Mammary epithelial cell (primary cell): ENCODE measurements at regions of chr10 and their contacts with region 1.

Region 1: DNA sequence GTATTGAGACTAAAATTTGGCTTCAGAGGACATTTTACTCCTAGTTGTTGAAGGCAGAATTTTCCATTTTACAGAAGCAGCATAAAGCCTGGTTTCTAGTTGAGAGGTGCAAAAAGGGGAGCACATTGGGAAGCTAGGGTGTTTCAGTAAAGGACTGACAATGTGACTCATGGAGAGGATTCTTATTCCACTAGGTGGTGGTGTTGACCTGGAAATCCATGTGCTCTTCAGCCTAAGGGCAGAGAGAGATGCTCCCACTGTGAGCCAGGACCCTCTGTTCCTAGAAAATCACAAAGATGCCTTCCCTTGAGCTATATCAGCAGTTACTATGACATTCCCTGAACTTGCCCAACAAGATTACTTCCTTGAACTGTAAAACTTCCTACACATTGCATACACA is 687.8 kb downstream of the IPMK start:
- DNase-seq: peak; percentile 27
- H3K4me3 ChIP-seq: no peak overlapping the region
- H3K27ac ChIP-seq: no peak overlapping the region
- H3K4me1 ChIP-seq: no peaks in the 10 kb centered on the region
- H3K27me3 ChIP-seq: peaks cover under 1% of the 10 kb centered on the region
- CTCF ChIP-seq: peak; percentile 37 to 75

Region 2: GRCh38 chr10:57716886-57717285 is 137.0 kb after region 1 on chr10:
- CTCF ChIA-PET with region 1: no interaction called
- dilution Hi-C with region 1: no loop called
- in situ Hi-C with region 1: no loop called
- intact Hi-C with region 1: loop called (anchors 1 kb)
- DNase-seq: peak; percentile 45
- H3K4me3 ChIP-seq: no peak overlapping the region
- H3K27ac ChIP-seq: no peak overlapping the region
- H3K4me1 ChIP-seq: no peaks in the 10 kb centered on the region
- H3K27me3 ChIP-seq: no peaks in the 10 kb centered on the region
- CTCF ChIP-seq: peak; percentile 56 to 75

Region 3: GRCh38 chr10:57849691-57850357 is 269.9 kb after region 1 on chr10:
- CTCF ChIA-PET with region 1: no interaction called
- dilution Hi-C with region 1: no loop called
- in situ Hi-C with region 1: no loop called
- intact Hi-C with region 1: loop called (anchors 1 kb)
- DNase-seq: peak; percentile 13
- H3K4me3 ChIP-seq: no peak overlapping the region
- H3K27ac ChIP-seq: no peak overlapping the region
- H3K4me1 ChIP-seq: no peaks in the 10 kb centered on the region
- H3K27me3 ChIP-seq: no peaks in the 10 kb centered on the region
- CTCF ChIP-seq: peak; percentile 50 to 53

Region 4: GRCh38 chr10:58072634-58073033 is 492.7 kb after region 1 on chr10:
- CTCF ChIA-PET with region 1: no interaction called
- dilution Hi-C with region 1: no loop called
- in situ Hi-C with region 1: loop called (anchors 25 kb)
- intact Hi-C with region 1: loop called (anchors 2 kb)
- DNase-seq: no peak
- H3K4me3 ChIP-seq: no peak overlapping the region
- H3K27ac ChIP-seq: no peak overlapping the region
- H3K4me1 ChIP-seq: no peaks in the 10 kb centered on the region
- H3K27me3 ChIP-seq: no peaks in the 10 kb centered on the region
- CTCF ChIP-seq: no peak